ENCODE measurements at regions of chr20 and their contacts with region 1.

Region 1: GRCh38 chr20:18507218-18508021 is at the start of gene SEC23B:
- DNase-seq: peak; percentile 98 to 99
- H3K4me3 ChIP-seq: peak within 1 kb of the TSS; percentile 48
- H3K4me3 Mint-ChIP-seq: peak within 1 kb of the TSS; percentile 99
- H3K27ac Mint-ChIP-seq: peak within 1 kb of the TSS; percentile 100
- H3K4me1 ChIP-seq: peaks cover 9% of the 10 kb centered on the region; the same call in 1 of the 2 replicates
- H3K4me1 Mint-ChIP-seq: peaks cover 7% of the 10 kb centered on the region
- H3K27me3 ChIP-seq: no peaks in the 10 kb centered on the region
- H3K27me3 Mint-ChIP-seq: no peaks in the 10 kb centered on the region
- CTCF ChIP-seq: no peak
- total RNA-seq, gene SEC23B: 84.1 and 85.3 TPM in 2 replicates

Region 2: GRCh38 chr20:18412221-18412901 is 95.1 kb before region 1 on chr20:
- CTCF ChIA-PET with region 1: no interaction called
- POLR2A ChIA-PET with region 1: interaction called, 3 read pairs
- intact Hi-C with region 1: loop called (anchors 1 kb)
- DNase-seq: no peak
- H3K4me3 ChIP-seq: peak overlapping the region; percentile 20
- H3K4me3 Mint-ChIP-seq: peak overlapping the region; percentile 70
- H3K27ac Mint-ChIP-seq: peak overlapping the region; percentile 84
- H3K4me1 ChIP-seq: no peaks in the 10 kb centered on the region
- H3K4me1 Mint-ChIP-seq: peaks cover 8% of the 10 kb centered on the region
- H3K27me3 ChIP-seq: no peaks in the 10 kb centered on the region
- H3K27me3 Mint-ChIP-seq: no peaks in the 10 kb centered on the region
- CTCF ChIP-seq: no peak

Region 3: DNA sequence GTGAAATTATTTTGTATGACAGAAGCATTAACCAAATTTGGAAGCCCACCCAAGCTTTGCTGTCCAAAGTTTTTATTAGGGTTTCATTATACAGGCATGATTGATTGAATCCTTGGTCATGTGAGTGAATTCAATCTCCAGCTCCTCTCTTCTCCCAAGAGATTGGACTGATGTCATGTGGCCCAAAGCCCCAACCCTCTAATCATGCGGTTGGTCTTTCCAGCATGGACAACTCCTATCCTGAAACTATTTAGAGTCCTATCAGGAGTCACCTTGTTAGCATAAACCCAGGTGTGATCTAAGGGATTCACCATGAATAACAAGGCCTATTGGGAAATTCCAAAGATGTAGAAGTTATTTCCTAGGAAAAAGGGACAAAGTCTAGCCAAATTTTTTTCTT is 29.6 kb before region 1 on chr20:
- CTCF ChIA-PET with region 1: no interaction called
- POLR2A ChIA-PET with region 1: interaction called, 17 read pairs
- intact Hi-C with region 1: no loop called
- DNase-seq: peak; percentile 28 to 43
- H3K4me3 ChIP-seq: no peak overlapping the region
- H3K4me3 Mint-ChIP-seq: peak overlapping the region; percentile 24
- H3K27ac Mint-ChIP-seq: peak overlapping the region; percentile 79
- H3K4me1 ChIP-seq: peaks cover 25% of the 10 kb centered on the region
- H3K4me1 Mint-ChIP-seq: peaks cover 8% of the 10 kb centered on the region
- H3K27me3 ChIP-seq: no peaks in the 10 kb centered on the region
- H3K27me3 Mint-ChIP-seq: no peaks in the 10 kb centered on the region
- CTCF ChIP-seq: no peak

Region 4: DNA sequence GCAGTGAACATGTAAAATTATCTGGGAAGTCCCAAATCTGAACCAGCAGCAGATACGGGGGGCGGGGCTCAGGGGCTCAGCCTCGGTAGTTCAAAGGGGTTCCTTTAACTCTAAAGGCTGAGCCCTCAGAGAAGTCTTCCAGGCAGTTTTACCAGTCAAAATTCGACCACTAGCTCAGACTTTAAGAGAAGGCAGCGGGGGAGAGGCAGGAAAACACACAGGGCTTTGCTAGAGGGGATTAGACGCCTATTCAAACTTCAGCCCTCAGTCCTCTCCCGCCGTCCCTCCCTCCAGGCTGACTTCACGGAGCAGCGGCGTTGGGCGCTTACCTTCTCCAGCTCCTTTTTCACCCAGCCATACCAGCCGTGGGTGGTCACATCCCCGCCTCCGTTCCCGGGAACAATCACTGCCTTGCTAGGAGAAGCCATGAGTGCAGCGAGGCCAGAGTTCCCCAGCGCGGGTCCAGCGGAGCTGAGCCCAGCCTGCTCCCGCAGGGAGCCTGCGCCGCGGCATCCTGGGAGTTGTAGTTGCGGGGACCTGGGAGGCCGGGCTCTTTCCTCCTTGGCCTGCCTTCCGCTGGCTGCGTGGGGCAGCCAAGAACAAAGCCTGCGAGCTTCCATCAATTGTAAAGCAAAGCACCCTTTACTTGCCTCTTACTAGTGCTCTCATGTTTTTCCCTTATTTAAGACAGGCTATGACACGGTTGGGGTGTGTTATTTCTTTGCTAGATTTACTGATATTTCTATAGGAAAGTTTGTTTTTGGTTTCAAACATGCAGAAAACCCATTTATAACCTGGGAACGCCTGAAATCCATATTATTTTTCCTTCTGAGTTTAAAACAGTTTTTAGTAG is 10.5 kb before region 1 on chr20 and contains the start of gene RBBP9:
- CTCF ChIA-PET with region 1: interaction called, 12 read pairs
- POLR2A ChIA-PET with region 1: interaction called, 55 read pairs
- intact Hi-C with region 1: loop called (anchors 1 kb)
- DNase-seq: peak; percentile 89 to 90
- H3K4me3 ChIP-seq: peak within 1 kb of the TSS; percentile 64
- H3K4me3 Mint-ChIP-seq: peak within 1 kb of the TSS; percentile 94
- H3K27ac Mint-ChIP-seq: peak within 1 kb of the TSS; percentile 72
- H3K4me1 ChIP-seq: peaks cover 8% of the 10 kb centered on the region; the same call in 1 of the 2 replicates
- H3K4me1 Mint-ChIP-seq: peaks cover 8% of the 10 kb centered on the region
- H3K27me3 ChIP-seq: no peaks in the 10 kb centered on the region
- H3K27me3 Mint-ChIP-seq: no peaks in the 10 kb centered on the region
- CTCF ChIP-seq: no peak
- total RNA-seq, gene RBBP9: 28.3 and 34.7 TPM in 2 replicates

Region 5: GRCh38 chr20:18587665-18588573 is 80.5 kb after region 1 on chr20 and contains the start of gene DTD1:
- CTCF ChIA-PET with region 1: interaction called, 7 read pairs
- POLR2A ChIA-PET with region 1: interaction called, 33 read pairs
- intact Hi-C with region 1: loop called (anchors 1 kb)
- DNase-seq: peak; percentile 94 to 97
- H3K4me3 ChIP-seq: peak within 1 kb of the TSS; percentile 51
- H3K4me3 Mint-ChIP-seq: peak within 1 kb of the TSS; percentile 74
- H3K27ac Mint-ChIP-seq: peak within 1 kb of the TSS; percentile 58
- H3K4me1 ChIP-seq: peaks cover 17% of the 10 kb centered on the region
- H3K4me1 Mint-ChIP-seq: peaks cover 14% of the 10 kb centered on the region
- H3K27me3 ChIP-seq: no peaks in the 10 kb centered on the region
- H3K27me3 Mint-ChIP-seq: no peaks in the 10 kb centered on the region
- CTCF ChIP-seq: peak; percentile 61 to 79
- total RNA-seq, gene DTD1: 90.0 and 109 TPM in 2 replicates

Region 6: GRCh38 chr20:18886756-18887155 is 379.3 kb after region 1 on chr20:
- CTCF ChIA-PET with region 1: no interaction called
- POLR2A ChIA-PET with region 1: no interaction called
- intact Hi-C with region 1: no loop called
- DNase-seq: no peak
- H3K4me3 ChIP-seq: no peak overlapping the region
- H3K4me3 Mint-ChIP-seq: no peak overlapping the region
- H3K27ac Mint-ChIP-seq: no peak overlapping the region
- H3K4me1 ChIP-seq: no peaks in the 10 kb centered on the region
- H3K4me1 Mint-ChIP-seq: no peaks in the 10 kb centered on the region
- H3K27me3 ChIP-seq: no peaks in the 10 kb centered on the region; the same call in 1 of the 2 replicates
- H3K27me3 Mint-ChIP-seq: peaks cover 9% of the 10 kb centered on the region
- CTCF ChIP-seq: no peak

Measured in Caco-2 (cell line).